ENCODE measurements at regions of chr5 and their contacts with region 1.

Region 1: GRCh38 chr5:173887610-173888472 is at the start of gene CPEB4:
- DNase-seq: peak; percentile 98
- H3K4me3 Mint-ChIP-seq: peak within 1 kb of the TSS; percentile 98
- H3K27ac Mint-ChIP-seq: peak within 1 kb of the TSS; percentile 96
- H3K4me1 Mint-ChIP-seq: peaks cover 66% of the 10 kb centered on the region
- H3K27me3 Mint-ChIP-seq: no peaks in the 10 kb centered on the region
- total RNA-seq, gene CPEB4: 7.6 to 7.8 TPM

Region 2: DNA sequence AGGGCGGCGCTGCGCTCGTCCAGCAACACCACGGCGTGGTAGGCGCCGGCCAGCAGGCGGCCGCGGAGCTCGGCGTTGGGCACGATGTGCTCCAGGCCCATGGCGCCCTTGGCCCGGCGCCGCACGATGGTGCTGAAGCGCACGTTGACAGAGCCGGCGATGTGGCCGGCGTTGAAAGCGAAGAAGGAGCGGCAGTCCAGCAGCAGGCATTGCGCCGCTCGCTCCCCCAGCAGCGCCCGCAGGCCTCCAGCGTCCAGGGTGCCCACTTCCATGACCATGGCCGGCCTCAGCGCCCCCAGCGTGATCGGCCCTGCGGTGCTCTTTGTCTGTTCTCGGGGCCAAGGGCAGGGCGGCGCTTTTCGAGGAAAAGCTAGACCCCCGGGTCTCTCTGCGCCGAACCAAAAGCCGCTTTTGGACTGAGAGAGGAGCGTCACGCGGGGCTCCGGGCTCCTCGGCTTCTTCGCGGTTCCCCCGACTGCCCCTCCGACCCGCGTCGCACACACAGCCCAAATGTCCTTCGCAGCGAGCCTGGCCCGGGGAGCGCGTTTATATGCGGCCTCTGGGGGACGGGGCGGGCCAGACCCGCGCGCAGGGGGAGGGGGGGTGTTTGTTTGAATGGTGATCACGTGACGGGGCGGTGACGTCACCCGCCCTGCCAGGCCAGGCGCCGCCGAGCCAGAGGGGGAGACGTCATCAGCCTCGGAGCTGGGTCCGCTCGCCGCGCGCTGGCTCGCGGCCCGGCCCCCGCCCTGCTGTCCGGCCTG is 1117.0 kb before region 1 on chr5 and contains the start of gene DUSP1:
- CTCF ChIA-PET with region 1: no interaction called
- intact Hi-C with region 1: loop called (anchors 10 kb)
- DNase-seq: peak; percentile 96
- H3K4me3 Mint-ChIP-seq: peak within 1 kb of the TSS; percentile 90
- H3K27ac Mint-ChIP-seq: peak within 1 kb of the TSS; percentile 93
- H3K4me1 Mint-ChIP-seq: peaks cover 66% of the 10 kb centered on the region
- H3K27me3 Mint-ChIP-seq: no peaks in the 10 kb centered on the region
- total RNA-seq, gene DUSP1: 7.0 to 7.3 TPM

Region 3: DNA sequence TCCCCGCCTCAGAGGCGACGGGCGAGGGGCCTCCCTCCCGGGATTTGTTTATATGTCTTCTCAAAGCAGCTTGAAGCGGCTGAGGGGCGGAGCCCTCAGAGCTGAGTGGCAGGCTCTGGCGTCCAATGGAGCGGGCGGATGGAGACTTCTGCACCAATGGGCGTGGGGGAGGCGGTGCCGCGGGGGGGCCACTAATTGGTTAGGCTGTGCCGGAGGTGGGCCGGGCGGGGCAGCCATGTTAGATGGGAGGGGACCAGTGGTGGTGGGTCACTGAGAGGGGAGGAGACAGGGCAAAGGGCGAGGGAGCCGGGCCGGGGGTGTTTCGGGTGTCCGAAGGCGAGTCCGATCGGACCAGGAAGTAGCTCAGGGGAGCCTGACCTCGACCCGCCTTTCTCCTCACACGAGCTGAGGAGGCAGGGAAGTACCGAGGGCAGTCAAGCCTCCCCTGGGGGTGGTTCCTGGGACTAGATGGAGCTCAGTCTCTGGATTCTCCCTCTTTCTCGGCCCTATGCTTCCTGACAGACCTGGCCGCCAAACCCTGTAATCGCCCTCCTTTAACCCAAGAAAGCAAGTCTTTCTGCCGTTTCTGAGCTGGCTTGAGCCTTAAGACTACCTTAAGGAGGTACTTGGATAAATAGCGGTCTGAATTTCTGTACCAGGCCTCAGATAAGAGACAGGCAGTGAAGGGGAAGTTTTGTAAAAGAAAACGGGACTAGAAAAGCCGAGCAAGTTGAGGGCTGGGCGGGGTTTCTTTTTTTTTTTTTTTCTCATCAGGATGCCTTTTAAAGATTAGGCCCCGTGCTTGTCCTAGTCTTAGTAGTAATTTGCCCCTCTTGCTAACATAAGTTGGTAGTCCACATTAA is 830.5 kb before region 1 on chr5:
- CTCF ChIA-PET with region 1: no interaction called
- intact Hi-C with region 1: loop called (anchors 2 kb)
- DNase-seq: peak; percentile 100
- H3K4me3 Mint-ChIP-seq: peak overlapping the region; percentile 91
- H3K27ac Mint-ChIP-seq: peak overlapping the region; percentile 97
- H3K4me1 Mint-ChIP-seq: peaks cover 51% of the 10 kb centered on the region
- H3K27me3 Mint-ChIP-seq: no peaks in the 10 kb centered on the region

Region 4: GRCh38 chr5:173823711-173824528 is 63.9 kb before region 1 on chr5:
- CTCF ChIA-PET with region 1: no interaction called
- intact Hi-C with region 1: loop called (anchors 1 kb)
- DNase-seq: no peak
- H3K4me3 Mint-ChIP-seq: no peak overlapping the region
- H3K27ac Mint-ChIP-seq: no peak overlapping the region
- H3K4me1 Mint-ChIP-seq: peaks cover 6% of the 10 kb centered on the region
- H3K27me3 Mint-ChIP-seq: no peaks in the 10 kb centered on the region

Region 5: DNA sequence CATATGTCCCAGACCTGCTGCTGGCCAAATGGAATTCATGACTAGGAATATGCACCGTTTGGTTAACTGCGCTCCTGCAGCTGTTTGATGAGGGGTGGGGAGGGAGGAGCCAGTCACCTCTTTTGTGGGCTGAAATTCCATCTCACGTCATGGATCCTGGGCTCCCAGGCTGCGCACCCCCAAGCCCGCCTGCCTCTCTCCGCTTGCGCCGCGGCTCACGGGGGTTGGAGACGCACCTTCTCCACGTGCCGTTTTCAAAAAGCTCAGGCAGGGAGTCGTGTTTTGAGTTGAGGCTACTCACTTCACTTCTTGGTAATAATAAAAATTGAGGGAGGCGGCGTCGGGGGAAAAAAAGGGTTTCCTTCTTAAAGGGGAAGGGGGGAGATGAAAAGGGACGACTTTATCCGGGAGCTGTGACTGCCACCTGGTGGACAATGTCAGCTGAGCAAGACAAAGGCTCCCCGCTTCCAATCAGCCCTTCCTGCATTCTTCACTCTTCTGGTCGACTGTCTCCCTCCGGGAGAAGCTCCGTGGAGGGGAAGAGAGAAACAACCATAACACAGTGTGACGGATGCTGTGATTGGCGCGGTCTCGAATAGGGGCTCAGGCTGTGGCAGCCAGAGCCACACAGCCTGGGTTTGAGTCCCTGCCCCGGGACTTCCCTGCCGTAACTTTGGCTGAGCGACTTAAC is 85.2 kb after region 1 on chr5:
- CTCF ChIA-PET with region 1: interaction called, 4 read pairs
- intact Hi-C with region 1: loop called (anchors 2 kb)
- DNase-seq: peak; percentile 90
- H3K4me3 Mint-ChIP-seq: peak overlapping the region; percentile 71
- H3K27ac Mint-ChIP-seq: peak overlapping the region; percentile 47
- H3K4me1 Mint-ChIP-seq: peaks cover 8% of the 10 kb centered on the region
- H3K27me3 Mint-ChIP-seq: peaks cover 8% of the 10 kb centered on the region

Region 6: GRCh38 chr5:174097518-174098185 is 209.8 kb after region 1 on chr5:
- CTCF ChIA-PET with region 1: no interaction called
- intact Hi-C with region 1: no loop called
- DNase-seq: no peak
- H3K4me3 Mint-ChIP-seq: no peak overlapping the region
- H3K27ac Mint-ChIP-seq: no peak overlapping the region
- H3K4me1 Mint-ChIP-seq: no peaks in the 10 kb centered on the region
- H3K27me3 Mint-ChIP-seq: peaks cover 2% of the 10 kb centered on the region

Region 7: GRCh38 chr5:175657593-175658271 is 1769.9 kb after region 1 on chr5 and contains the start of gene HRH2:
- CTCF ChIA-PET with region 1: no interaction called
- intact Hi-C with region 1: loop called (anchors 10 kb)
- DNase-seq: peak; percentile 74
- H3K4me3 Mint-ChIP-seq: peak within 1 kb of the TSS; percentile 90
- H3K27ac Mint-ChIP-seq: peak within 1 kb of the TSS; percentile 72
- H3K4me1 Mint-ChIP-seq: peaks cover 79% of the 10 kb centered on the region
- H3K27me3 Mint-ChIP-seq: no peaks in the 10 kb centered on the region
- total RNA-seq, gene HRH2: 8.7 to 10.0 TPM